ENCODE measurements at regions of chr18 and their contacts with region 1.

Region 1: GRCh38 chr18:61893971-61894750 is 1.4 kb upstream of the RNF152 start:
- DNase-seq: peak; percentile 89
- ATAC-seq: peak; percentile 95

Region 2: GRCh38 chr18:61797696-61798590 is 96.2 kb before region 1 on chr18:
- intact Hi-C with region 1: no loop called
- DNase-seq: no peak
- ATAC-seq: no peak

Region 3: GRCh38 chr18:61833387-61833786 is 60.8 kb before region 1 on chr18:
- intact Hi-C with region 1: loop called (anchors 5 kb)
- DNase-seq: no peak
- ATAC-seq: peak; percentile 60

Measured in left ventricle myocardium superior (tissue), 1 donor.